BJ (cell line): ENCODE measurements at regions of chr17 and their contacts with region 1.

Region 1: GRCh38 chr17:76182016-76182764 is 41.1 kb upstream of the FOXJ1 start:
- DNase-seq: peak; percentile 35
- H3K4me3 ChIP-seq: no peak overlapping the region
- H3K27me3 ChIP-seq: no peaks in the 10 kb centered on the region
- CTCF ChIP-seq: peak; percentile 90

Region 2: GRCh38 chr17:75764711-75765421 is 417.3 kb before region 1 on chr17 and contains the start of gene GALK1:
- CTCF ChIA-PET with region 1: no interaction called
- POLR2A ChIA-PET with region 1: interaction called, 15 read pairs
- DNase-seq: no peak
- H3K4me3 ChIP-seq: peak within 1 kb of the TSS; percentile 78
- H3K27me3 ChIP-seq: no peaks in the 10 kb centered on the region
- CTCF ChIP-seq: peak; percentile 71
- polyA plus RNA-seq, gene GALK1: 19.9 and 35.8 TPM in 2 replicates

Region 3: DNA sequence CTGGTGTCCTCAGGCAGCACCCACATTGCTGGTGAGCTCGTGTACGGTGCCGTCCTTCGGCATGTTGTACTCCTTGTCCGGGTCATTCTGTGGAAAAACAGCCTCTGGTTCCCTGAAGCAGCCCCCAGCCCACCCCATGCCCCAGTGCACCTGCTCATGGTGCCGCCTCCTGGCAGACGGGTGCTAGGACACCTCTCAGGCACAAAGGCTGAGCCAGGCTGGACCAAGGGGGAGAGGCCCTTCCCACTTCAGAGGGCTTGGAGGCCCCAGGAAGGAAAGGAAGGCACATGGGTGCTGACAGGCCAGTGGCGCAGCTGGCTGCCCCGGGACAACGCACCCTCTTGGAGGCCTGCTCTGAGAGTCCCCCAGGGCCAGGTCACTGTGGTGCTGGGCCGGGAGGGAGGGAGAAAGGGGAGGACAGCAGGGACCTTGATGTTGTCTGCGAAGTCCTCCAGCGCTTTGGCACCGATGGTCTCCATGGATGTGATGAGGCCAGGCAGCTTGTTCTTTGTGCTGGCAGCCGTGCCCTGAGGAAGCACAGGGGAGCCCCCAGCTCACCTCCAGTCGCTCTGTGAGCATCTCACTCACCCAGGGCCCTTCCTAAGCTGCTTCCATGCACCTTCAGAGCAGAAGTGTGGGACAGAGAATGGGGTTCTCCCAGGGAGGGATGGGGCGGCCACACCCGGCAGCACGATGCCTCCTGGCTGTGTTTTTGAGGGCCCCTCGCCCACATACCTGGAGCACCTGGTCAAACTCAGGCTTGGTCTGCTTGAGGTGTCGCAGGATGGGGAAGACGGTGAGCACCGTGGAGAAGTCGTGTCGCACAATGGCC is 93.9 kb before region 1 on chr17:
- CTCF ChIA-PET with region 1: no interaction called
- POLR2A ChIA-PET with region 1: no interaction called
- DNase-seq: no peak
- H3K4me3 ChIP-seq: no peak overlapping the region
- H3K27me3 ChIP-seq: no peaks in the 10 kb centered on the region
- CTCF ChIP-seq: no peak

Region 4: DNA sequence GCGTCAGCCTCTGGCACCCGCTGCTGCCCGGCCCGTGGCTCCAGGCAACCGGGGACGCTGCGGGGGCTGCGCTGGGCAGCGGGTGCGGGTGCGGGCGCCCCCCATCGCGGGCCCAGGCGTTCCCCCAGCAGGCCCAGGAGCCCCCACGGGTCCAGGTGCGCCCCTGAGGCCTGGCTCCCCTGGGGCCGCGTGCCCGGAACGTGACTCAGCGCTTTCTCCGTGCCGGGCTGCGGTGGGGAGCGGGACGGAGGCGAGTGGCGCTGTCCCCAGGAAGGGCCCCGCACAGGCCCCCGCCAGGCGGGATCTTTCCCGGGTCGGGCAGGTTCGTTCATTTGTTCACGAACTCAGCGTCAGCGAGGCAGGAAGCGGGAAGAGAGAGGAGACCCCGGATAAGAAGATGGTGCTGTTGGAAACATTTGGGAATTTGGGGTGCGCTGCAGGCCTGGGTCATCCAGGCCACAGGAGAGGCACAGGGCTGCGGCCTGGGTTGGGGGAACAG is 60.2 kb before region 1 on chr17:
- CTCF ChIA-PET with region 1: interaction called, 99 read pairs
- POLR2A ChIA-PET with region 1: no interaction called
- DNase-seq: no peak
- H3K4me3 ChIP-seq: peak overlapping the region; percentile 18
- H3K27me3 ChIP-seq: no peaks in the 10 kb centered on the region
- CTCF ChIP-seq: no peak

Region 5: GRCh38 chr17:76153640-76154039 is 28.6 kb before region 1 on chr17:
- CTCF ChIA-PET with region 1: interaction called, 10 read pairs
- POLR2A ChIA-PET with region 1: no interaction called
- DNase-seq: no peak
- H3K4me3 ChIP-seq: no peak overlapping the region
- H3K27me3 ChIP-seq: peaks cover 10% of the 10 kb centered on the region
- CTCF ChIP-seq: peak; percentile 43

Region 6: GRCh38 chr17:76166168-76166567 is 16.0 kb before region 1 on chr17:
- CTCF ChIA-PET with region 1: interaction called, 24 read pairs
- POLR2A ChIA-PET with region 1: no interaction called
- DNase-seq: no peak
- H3K4me3 ChIP-seq: no peak overlapping the region
- H3K27me3 ChIP-seq: peaks cover 4% of the 10 kb centered on the region
- CTCF ChIP-seq: 0 out of 2 replicates have a peak, but pooled peaks have one; percentile 11

Region 7: DNA sequence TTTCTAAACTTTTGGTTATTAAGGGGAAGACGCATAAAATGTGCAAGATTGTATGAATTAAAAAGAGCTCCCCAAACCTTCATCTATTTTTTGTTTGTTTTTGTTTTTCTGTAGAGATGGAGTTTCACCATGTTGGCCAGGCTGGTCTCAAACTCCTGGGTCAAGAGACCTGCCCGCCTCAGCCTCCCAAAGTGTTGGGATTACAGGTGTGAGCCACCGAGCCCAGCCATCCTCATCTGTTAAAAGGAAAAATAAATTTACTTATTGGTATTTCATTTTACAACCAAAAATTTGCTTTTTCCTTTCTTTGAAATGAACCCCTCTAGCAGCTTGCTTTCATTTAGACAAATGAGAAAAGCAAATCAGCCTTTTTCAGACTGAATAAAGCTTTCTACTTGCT is 34.9 kb after region 1 on chr17:
- CTCF ChIA-PET with region 1: interaction called, 12 read pairs
- POLR2A ChIA-PET with region 1: no interaction called
- DNase-seq: no peak
- H3K4me3 ChIP-seq: no peak overlapping the region
- H3K27me3 ChIP-seq: peaks cover 1% of the 10 kb centered on the region; the same call in 1 of the 2 replicates
- CTCF ChIP-seq: no peak